Right ventricle myocardium superior (tissue), 1 donor: ENCODE measurements at regions of chr22 and their contacts with region 1.

Region 1: DNA sequence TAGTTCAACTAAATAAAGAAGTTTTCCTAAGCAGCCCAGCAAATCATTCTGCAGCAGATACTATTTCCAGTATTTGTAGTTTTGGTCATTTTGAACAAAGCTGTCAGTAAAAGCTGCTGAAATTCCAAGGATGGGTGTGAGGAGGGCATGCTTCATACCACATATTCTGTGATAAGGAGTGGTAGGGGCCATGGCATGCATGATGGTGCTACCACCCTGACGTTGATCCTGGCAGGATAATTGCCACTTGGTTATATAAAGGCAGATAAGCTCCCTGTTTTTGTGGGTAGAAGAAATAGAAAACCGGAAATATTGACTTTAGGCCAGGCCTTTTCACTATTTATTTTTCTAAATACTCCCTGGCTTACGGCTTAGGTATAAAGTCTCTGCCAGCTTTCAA is 33.1 kb upstream of the L3MBTL2 start:
- DNase-seq: no peak
- ATAC-seq: no peak

Region 2: DNA sequence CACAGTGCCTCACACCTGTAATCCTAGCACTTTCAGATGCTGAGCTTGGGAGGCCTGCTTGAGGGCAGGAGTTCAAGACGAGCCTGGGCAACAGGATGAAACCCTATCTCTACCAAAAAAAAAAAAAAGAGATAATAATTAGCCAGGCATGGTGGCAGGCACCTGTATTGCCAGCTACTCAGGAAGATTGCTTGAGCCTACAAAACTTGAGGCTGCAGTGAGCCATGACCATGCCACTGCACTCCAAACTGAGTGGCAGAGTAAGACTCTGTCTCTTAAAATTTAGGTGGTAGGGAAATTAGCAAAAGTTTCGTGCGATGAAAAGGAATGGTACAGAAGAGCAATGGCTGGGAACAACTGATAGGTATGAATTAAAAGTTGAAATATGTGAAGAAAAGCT is 333.5 kb before region 1 on chr22:
- intact Hi-C with region 1: loop called (anchors 10 kb)
- DNase-seq: no peak
- ATAC-seq: no peak

Region 3: DNA sequence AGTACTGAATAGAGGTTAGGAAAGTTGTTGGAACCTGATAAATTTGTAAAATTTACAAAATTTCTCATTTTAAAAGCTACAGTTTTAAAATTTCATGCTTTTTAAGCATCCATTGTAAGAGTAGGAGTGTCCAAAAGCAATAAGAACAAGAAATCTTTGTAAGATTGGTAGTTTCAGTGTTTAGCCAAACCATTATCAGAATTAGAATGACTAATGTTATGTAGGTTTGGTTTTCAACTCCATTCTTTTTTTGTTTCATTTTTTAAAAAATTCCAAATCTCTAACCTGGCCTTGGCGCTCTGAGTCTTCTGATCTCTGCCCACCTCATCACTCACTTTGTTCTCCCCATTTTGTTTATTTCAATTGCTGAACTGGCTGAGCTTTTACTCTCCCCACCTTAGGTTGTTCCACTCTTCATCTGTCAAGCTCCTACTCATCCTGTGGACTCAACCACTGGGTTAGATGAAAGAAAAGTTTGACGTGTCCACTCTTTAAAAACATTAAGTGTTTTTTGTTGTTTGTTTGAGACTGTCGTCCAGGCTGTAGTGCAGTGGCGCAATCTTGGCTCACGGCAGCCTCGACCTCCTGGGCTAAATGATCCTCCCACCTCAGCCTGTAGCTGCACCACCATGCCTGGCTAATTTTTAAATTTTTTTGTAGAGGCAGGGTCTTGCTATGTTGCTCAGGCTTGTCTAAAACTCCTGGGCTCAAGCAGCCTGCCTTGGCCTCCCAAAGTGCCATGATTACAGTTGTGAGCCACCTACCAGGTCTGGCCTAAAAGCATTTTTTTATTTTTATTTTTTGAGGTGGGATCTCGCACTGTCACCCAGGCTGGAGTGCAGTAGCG is 65.7 kb before region 1 on chr22:
- intact Hi-C with region 1: no loop called
- DNase-seq: no peak
- ATAC-seq: peak; percentile 37

Region 4: DNA sequence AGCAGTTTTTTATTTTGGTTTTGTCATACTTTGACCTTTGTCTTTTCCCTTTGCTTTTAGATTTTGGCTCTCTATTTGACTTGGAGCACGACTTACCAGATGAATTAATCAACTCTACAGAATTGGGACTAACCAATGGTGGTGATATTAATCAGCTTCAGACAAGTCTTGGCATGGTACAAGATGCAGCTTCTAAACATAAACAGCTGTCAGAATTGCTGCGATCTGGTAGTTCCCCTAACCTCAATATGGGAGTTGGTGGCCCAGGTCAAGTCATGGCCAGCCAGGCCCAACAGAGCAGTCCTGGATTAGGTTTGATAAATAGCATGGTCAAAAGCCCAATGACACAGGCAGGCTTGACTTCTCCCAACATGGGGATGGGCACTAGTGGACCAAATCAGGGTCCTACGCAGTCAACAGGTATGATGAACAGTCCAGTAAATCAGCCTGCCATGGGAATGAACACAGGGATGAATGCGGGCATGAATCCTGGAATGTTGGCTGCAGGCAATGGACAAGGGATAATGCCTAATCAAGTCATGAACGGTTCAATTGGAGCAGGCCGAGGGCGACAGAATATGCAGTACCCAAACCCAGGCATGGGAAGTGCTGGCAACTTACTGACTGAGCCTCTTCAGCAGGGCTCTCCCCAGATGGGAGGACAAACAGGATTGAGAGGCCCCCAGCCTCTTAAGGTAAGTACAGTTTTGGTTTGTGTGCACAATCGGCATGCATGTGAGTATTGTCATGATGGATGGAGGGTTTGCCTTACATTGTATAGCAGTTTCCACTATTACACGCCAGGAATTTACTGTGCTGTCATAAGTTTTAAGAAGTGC is 54.6 kb before region 1 on chr22:
- intact Hi-C with region 1: loop called (anchors 2 kb)
- DNase-seq: no peak
- ATAC-seq: no peak

Region 5: GRCh38 chr22:41327124-41327523 is 155.1 kb after region 1 on chr22:
- intact Hi-C with region 1: no loop called
- DNase-seq: no peak
- ATAC-seq: no peak

Region 6: GRCh38 chr22:41468381-41469217 is 296.6 kb after region 1 on chr22 and contains the starts of genes ACO2 and PHF5A:
- intact Hi-C with region 1: no loop called
- DNase-seq: peak; percentile 98
- ATAC-seq: peak; percentile 96
- total RNA-seq, gene ACO2: 835 TPM
- total RNA-seq, gene PHF5A: 26.4 TPM